H1 (cell line): ENCODE measurements at regions of chr7 and their contacts with region 1.

Region 1: DNA sequence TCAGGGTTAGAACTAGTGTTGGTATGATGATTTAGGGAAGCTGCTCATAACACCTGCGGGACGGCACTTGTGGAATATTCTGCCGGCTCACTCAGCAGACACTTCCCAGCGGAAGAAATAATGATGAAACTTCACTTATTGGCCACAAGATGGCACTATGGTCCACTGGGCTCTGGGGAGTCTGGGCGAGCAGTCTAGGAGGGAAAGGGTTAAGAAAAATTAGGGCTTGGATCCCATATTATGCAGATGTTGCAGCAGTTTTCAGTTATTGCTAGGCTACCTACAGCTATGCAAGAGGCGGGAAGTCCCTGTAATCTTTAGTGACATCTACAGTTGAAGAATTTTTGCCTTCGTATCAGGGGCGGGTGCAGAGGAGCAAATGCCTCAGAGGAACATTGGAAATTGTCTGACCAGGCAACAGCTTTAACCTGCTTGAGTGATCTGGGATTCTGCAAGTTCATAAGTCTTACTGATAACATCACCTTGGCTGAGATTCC is 238.7 kb upstream of the PRSS58 start:
- DNase-seq: no peak
- H3K4me3 ChIP-seq: no peak overlapping the region
- H3K27ac ChIP-seq: no peak overlapping the region
- H3K4me1 ChIP-seq: no peaks in the 10 kb centered on the region
- H3K27me3 ChIP-seq: no peaks in the 10 kb centered on the region
- CTCF ChIP-seq: peak; percentile 58 to 83 (median 78)
- EP300 ChIP-seq: no peak
- POLR2A ChIP-seq: no peak
- RAD21 ChIP-seq: peak; percentile 37 to 61

Region 2: DNA sequence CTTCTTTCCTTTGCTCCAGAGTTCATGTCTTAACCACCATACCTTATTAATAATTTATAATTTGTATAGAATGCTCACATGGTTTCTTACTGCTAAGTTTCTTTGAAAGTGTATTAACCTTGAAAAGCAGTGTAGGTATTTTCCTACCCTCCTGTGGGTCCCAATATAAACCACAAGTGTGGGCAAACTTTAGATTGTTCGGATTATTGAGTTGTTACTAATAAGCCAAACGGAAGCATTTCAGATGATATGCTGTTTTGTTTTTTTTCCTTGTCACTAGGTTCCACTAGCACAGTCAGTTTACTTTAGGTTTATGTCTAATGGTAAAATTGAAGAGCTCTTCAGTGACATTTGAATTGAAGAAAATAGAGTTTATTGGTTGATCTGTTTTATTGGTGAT is 748.2 kb before region 1 on chr7:
- CTCF ChIA-PET with region 1: no interaction called
- POLR2A ChIA-PET with region 1: no interaction called
- DNase-seq: no peak
- H3K4me3 ChIP-seq: no peak overlapping the region
- H3K27ac ChIP-seq: no peak overlapping the region
- H3K4me1 ChIP-seq: no peaks in the 10 kb centered on the region
- H3K27me3 ChIP-seq: no peaks in the 10 kb centered on the region
- CTCF ChIP-seq: no peak
- EP300 ChIP-seq: no peak
- POLR2A ChIP-seq: no peak
- RAD21 ChIP-seq: no peak

Region 3: GRCh38 chr7:142391191-142391992 is 105.2 kb before region 1 on chr7:
- CTCF ChIA-PET with region 1: interaction called, 26 read pairs
- POLR2A ChIA-PET with region 1: no interaction called
- DNase-seq: peak; percentile 38 to 88
- H3K4me3 ChIP-seq: no peak overlapping the region
- H3K27ac ChIP-seq: no peak overlapping the region
- H3K4me1 ChIP-seq: no peaks in the 10 kb centered on the region; a peak in 1 of 7 replicates
- H3K27me3 ChIP-seq: no peaks in the 10 kb centered on the region
- CTCF ChIP-seq: peak; percentile 90 to 93 (median 90)
- EP300 ChIP-seq: no peak
- POLR2A ChIP-seq: no peak
- RAD21 ChIP-seq: peak; percentile 90 to 91

Region 4: GRCh38 chr7:142438235-142438922 is 58.2 kb before region 1 on chr7:
- CTCF ChIA-PET with region 1: interaction called, 21 read pairs
- POLR2A ChIA-PET with region 1: no interaction called
- DNase-seq: peak in 1 of 2 experiments; percentile 61
- H3K4me3 ChIP-seq: no peak overlapping the region
- H3K27ac ChIP-seq: no peak overlapping the region
- H3K4me1 ChIP-seq: peaks cover 0 to 10% (median 0%) of the 10 kb centered on the region in 4 experiments; a peak in 1 of 7 replicates
- H3K27me3 ChIP-seq: no peaks in the 10 kb centered on the region
- CTCF ChIP-seq: peak; percentile 95 to 99 (median 95)
- EP300 ChIP-seq: 0 out of 3 replicates have a peak, but pooled peaks of 1 of the 2 experiments have one; percentile 23
- POLR2A ChIP-seq: no peak
- RAD21 ChIP-seq: peak; percentile 70 to 83

Region 5: DNA sequence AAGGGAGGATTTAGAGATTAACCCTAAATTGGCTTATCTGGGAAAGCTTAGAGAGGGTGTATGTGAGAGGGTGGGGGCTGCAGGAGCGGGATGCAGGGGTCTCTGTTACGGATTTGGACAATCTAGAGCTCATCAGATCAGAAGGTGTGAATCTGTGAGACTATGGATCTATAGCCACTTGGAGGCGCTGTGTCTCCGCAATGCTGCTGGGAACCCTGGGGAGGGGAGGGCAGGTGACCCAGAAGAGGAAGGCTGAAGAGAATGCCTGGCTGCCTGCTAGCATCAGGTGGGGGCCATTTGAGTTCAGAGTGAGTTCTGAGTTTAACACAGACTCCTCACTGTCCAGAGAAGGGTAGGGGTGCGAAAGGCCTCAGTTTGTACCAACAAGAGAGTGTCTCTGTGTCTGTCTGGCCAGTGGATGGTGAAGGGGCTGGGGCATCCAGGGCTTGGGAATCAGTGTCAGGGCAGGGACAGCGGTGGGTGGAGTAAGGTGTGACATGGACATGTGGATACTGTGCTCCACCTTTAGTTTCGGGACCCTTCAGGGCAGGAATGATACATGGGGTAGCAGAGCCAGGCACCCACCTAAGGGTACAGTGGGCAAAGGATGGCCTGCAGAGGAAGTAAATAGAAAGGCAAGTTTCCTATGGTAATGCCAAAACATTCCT is 51.4 kb before region 1 on chr7:
- CTCF ChIA-PET with region 1: interaction called, 21 read pairs
- POLR2A ChIA-PET with region 1: no interaction called
- DNase-seq: peak in 1 of 2 experiments; percentile 83
- H3K4me3 ChIP-seq: no peak overlapping the region
- H3K27ac ChIP-seq: no peak overlapping the region
- H3K4me1 ChIP-seq: peaks cover 2 to 13% (median 4%) of the 10 kb centered on the region in 4 experiments; a peak in 4 of 7 replicates
- H3K27me3 ChIP-seq: no peaks in the 10 kb centered on the region
- CTCF ChIP-seq: peak; percentile 72 to 93 (median 83)
- EP300 ChIP-seq: no peak
- POLR2A ChIP-seq: no peak
- RAD21 ChIP-seq: peak; percentile 80 to 82

Region 6: GRCh38 chr7:142508258-142508689 is 11.7 kb after region 1 on chr7:
- CTCF ChIA-PET with region 1: interaction called, 665 read pairs
- POLR2A ChIA-PET with region 1: no interaction called
- DNase-seq: no peak
- H3K4me3 ChIP-seq: no peak overlapping the region
- H3K27ac ChIP-seq: no peak overlapping the region
- H3K4me1 ChIP-seq: no peaks in the 10 kb centered on the region
- H3K27me3 ChIP-seq: no peaks in the 10 kb centered on the region
- CTCF ChIP-seq: no peak
- EP300 ChIP-seq: no peak
- POLR2A ChIP-seq: no peak
- RAD21 ChIP-seq: no peak

Region 7: DNA sequence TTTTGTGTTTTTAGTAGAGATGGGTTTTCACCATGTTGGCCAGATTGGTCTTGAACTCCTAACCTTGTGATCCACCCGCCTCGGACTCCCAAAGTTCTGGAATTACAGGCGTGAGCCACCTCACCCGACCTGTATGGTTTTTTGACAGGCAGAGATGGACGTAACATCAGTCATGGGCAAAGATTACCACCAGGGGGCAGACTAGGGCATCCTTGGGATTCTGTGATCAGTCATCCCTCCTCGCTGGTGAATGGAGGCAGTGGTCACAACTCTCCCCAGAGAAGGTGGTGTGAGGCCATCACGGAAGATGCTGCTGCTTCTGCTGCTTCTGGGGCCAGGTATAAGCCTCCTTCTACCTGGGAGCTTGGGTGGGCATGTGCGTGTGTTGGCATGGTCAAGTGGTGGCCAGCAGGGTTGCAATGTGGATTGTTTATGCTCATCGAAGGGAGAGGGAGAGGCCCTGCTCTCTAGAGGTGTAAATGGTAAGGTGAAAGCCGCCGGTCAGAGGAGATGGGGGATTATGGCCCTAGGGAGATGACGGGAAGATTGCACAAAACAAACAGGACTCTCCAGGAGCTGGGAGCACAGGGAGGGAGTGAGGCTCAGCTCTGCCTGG is 129.9 kb after region 1 on chr7:
- CTCF ChIA-PET with region 1: interaction called, 10 read pairs
- POLR2A ChIA-PET with region 1: no interaction called
- DNase-seq: peak in 1 of 2 experiments; percentile 94
- H3K4me3 ChIP-seq: no peak overlapping the region
- H3K27ac ChIP-seq: no peak overlapping the region
- H3K4me1 ChIP-seq: peaks cover 0 to 3% (median 0%) of the 10 kb centered on the region in 4 experiments; a peak in 1 of 7 replicates
- H3K27me3 ChIP-seq: no peaks in the 10 kb centered on the region; a peak in 1 of 7 replicates
- CTCF ChIP-seq: peak; percentile 60 to 85 (median 79)
- EP300 ChIP-seq: no peak
- POLR2A ChIP-seq: no peak
- RAD21 ChIP-seq: peak; percentile 55 to 62

Region 8: GRCh38 chr7:142654398-142654797 is 157.8 kb after region 1 on chr7:
- CTCF ChIA-PET with region 1: no interaction called
- POLR2A ChIA-PET with region 1: no interaction called
- DNase-seq: no peak
- H3K4me3 ChIP-seq: no peak overlapping the region
- H3K27ac ChIP-seq: no peak overlapping the region
- H3K4me1 ChIP-seq: no peaks in the 10 kb centered on the region
- H3K27me3 ChIP-seq: no peaks in the 10 kb centered on the region
- CTCF ChIP-seq: no peak
- EP300 ChIP-seq: no peak
- POLR2A ChIP-seq: no peak
- RAD21 ChIP-seq: no peak

Region 9: DNA sequence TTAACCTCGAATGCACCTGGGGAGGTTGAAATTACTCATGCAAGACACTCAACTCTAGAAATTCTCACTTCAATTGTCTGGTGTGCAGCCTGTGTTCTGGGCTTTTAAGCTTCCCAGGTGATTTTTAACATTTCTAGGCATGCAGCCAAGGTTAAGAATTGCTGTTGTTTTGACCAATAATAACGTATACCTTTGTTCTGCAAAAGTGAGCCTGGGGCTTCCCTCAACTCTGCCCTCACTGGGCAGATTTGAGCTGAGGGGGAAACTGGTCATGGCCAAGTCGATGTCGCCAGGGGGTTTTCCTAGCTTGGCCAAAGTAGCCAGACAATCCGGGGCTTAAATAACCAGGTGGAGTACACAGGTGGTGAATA is 274.7 kb after region 1 on chr7:
- CTCF ChIA-PET with region 1: no interaction called
- POLR2A ChIA-PET with region 1: no interaction called
- DNase-seq: no peak
- H3K4me3 ChIP-seq: no peak overlapping the region
- H3K27ac ChIP-seq: no peak overlapping the region
- H3K4me1 ChIP-seq: no peaks in the 10 kb centered on the region
- H3K27me3 ChIP-seq: no peaks in the 10 kb centered on the region
- CTCF ChIP-seq: no peak
- EP300 ChIP-seq: no peak
- POLR2A ChIP-seq: no peak
- RAD21 ChIP-seq: no peak